Caco-2 (cell line): ENCODE measurements at regions of chr17 and their contacts with region 1.

Region 1: GRCh38 chr17:3738562-3739295 is 15.0 kb downstream of the HASPIN start:
- DNase-seq: peak in 1 of 2 experiments; percentile 21
- H3K4me3 ChIP-seq: no peak overlapping the region
- H3K4me3 Mint-ChIP-seq: peak overlapping the region; percentile 51
- H3K27ac Mint-ChIP-seq: no peak overlapping the region
- H3K4me1 ChIP-seq: no peaks in the 10 kb centered on the region
- H3K4me1 Mint-ChIP-seq: no peaks in the 10 kb centered on the region
- H3K27me3 ChIP-seq: no peaks in the 10 kb centered on the region
- H3K27me3 Mint-ChIP-seq: no peaks in the 10 kb centered on the region
- CTCF ChIP-seq: no peak

Region 2: DNA sequence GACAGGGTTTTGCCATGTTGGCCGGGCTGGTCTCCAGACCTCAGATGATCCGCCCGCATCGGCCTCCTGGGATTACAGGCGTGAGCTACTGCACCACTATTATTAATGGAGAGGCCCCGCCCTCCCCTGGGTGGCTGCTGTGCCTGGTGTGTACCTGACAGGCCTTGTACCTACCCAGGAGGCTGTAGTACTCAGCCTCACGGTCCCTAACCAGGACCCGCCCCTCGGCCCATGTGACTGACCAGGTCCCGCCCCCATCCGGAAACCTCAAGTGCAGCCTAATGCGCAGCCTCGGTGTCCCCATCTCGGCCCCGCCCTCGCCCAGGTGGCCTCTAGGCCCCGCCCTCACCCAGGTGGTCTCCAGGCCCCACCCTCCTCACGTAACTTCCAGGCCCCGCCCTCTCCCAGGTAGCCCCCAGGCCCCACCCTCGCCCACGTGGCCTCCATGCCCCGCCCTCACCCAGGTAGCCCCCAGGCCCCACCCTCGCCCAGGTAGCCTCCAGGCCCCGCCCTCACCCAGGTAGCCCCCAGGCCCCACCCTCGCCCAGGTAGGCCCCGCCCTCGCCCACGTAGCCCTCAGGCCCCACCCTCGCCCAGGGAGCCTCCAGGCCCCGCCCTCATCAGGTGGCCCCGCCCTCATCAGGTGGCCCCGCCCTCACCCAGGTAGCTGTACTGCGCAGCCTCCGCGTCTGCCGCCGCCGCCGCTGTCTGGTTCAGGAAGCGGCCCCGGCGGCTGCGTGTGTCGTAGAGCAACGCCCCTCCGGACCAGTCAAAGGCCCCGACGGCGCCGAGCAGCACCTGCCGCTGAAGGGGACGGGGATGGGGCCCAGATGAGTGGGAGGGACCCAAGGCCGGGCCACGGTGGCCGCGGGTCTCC is 16.0 kb after region 1 on chr17:
- CTCF ChIA-PET with region 1: interaction called, 10 read pairs
- POLR2A ChIA-PET with region 1: no interaction called
- intact Hi-C with region 1: no loop called
- DNase-seq: peak; percentile 92 to 95
- H3K4me3 ChIP-seq: peak overlapping the region; percentile 59
- H3K4me3 Mint-ChIP-seq: peak overlapping the region; percentile 79
- H3K27ac Mint-ChIP-seq: peak overlapping the region; percentile 70
- H3K4me1 ChIP-seq: peaks cover 3% of the 10 kb centered on the region; the same call in 1 of the 2 replicates
- H3K4me1 Mint-ChIP-seq: no peaks in the 10 kb centered on the region
- H3K27me3 ChIP-seq: no peaks in the 10 kb centered on the region
- H3K27me3 Mint-ChIP-seq: no peaks in the 10 kb centered on the region
- CTCF ChIP-seq: no peak

Region 3: GRCh38 chr17:3815925-3816324 is 77.2 kb after region 1 on chr17:
- CTCF ChIA-PET with region 1: interaction called, 14 read pairs
- POLR2A ChIA-PET with region 1: no interaction called
- intact Hi-C with region 1: no loop called
- DNase-seq: no peak
- H3K4me3 ChIP-seq: no peak overlapping the region
- H3K4me3 Mint-ChIP-seq: no peak overlapping the region
- H3K27ac Mint-ChIP-seq: no peak overlapping the region
- H3K4me1 ChIP-seq: no peaks in the 10 kb centered on the region
- H3K4me1 Mint-ChIP-seq: no peaks in the 10 kb centered on the region
- H3K27me3 ChIP-seq: no peaks in the 10 kb centered on the region
- H3K27me3 Mint-ChIP-seq: no peaks in the 10 kb centered on the region
- CTCF ChIP-seq: no peak

Region 4: DNA sequence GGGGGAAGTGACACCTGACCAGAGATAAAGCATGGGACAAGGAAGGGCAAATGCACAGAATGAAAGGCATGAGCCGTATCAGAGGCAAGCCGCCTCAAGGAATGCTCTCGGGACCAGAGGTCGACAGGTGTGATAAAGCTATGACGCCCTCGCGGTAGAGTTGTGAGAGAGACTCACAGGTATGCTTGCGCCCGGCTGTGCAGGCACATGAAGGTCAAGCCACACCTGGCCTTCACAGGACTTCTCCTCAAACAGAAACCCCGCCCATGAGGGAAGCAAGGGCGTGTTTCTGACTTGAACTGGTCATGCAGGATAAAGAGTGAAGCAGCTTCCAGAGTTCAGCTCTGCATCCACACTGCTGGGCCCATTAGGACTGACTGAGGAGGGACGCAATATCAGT is 99.5 kb after region 1 on chr17:
- CTCF ChIA-PET with region 1: interaction called, 14 read pairs
- POLR2A ChIA-PET with region 1: no interaction called
- intact Hi-C with region 1: no loop called
- DNase-seq: peak; percentile 91 to 97
- H3K4me3 ChIP-seq: no peak overlapping the region
- H3K4me3 Mint-ChIP-seq: peak overlapping the region; percentile 52
- H3K27ac Mint-ChIP-seq: peak overlapping the region; percentile 90
- H3K4me1 ChIP-seq: peaks cover 10% of the 10 kb centered on the region
- H3K4me1 Mint-ChIP-seq: peaks cover 8% of the 10 kb centered on the region
- H3K27me3 ChIP-seq: no peaks in the 10 kb centered on the region
- H3K27me3 Mint-ChIP-seq: no peaks in the 10 kb centered on the region
- CTCF ChIP-seq: no peak